Aorta (tissue), 5 donors: ENCODE measurements at regions of chr1 and their contacts with region 1.

Region 1: GRCh38 chr1:11719313-11720032 is 16.5 kb upstream of the AGTRAP start:
- DNase-seq: peak; percentile 91 to 95
- ATAC-seq: peak; percentile 92
- H3K4me3 ChIP-seq: no peak overlapping the region
- H3K27ac ChIP-seq: no peak overlapping the region
- H3K4me1 ChIP-seq: no peaks in the 10 kb centered on the region
- H3K27me3 ChIP-seq: no peaks in the 10 kb centered on the region

Region 2: DNA sequence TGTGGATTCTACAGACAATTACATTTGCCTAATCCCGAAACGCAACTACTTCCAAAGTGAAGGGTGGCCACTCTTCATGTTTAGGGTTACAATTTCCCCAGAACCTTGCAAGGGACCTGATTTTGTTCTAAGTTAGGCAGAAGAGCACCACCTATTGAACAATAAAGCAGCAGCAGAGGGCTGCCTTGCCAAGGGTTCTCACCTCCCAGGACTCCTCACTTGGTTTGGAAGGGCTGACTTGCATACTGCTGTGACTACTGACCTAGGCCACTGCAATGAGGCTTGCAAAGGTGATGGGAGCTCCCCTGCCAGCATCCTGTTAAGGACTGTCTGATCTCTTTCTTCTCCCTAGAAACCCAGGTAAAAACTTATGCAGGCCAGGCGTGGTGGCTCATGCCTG is 471.3 kb before region 1 on chr1:
- intact Hi-C with region 1: loop called in 1 of 2 experiments (anchors 5 kb)
- DNase-seq: no peak
- ATAC-seq: no peak
- H3K4me3 ChIP-seq: no peak overlapping the region
- H3K27ac ChIP-seq: no peak overlapping the region
- H3K4me1 ChIP-seq: no peaks in the 10 kb centered on the region
- H3K27me3 ChIP-seq: no peaks in the 10 kb centered on the region

Region 3: DNA sequence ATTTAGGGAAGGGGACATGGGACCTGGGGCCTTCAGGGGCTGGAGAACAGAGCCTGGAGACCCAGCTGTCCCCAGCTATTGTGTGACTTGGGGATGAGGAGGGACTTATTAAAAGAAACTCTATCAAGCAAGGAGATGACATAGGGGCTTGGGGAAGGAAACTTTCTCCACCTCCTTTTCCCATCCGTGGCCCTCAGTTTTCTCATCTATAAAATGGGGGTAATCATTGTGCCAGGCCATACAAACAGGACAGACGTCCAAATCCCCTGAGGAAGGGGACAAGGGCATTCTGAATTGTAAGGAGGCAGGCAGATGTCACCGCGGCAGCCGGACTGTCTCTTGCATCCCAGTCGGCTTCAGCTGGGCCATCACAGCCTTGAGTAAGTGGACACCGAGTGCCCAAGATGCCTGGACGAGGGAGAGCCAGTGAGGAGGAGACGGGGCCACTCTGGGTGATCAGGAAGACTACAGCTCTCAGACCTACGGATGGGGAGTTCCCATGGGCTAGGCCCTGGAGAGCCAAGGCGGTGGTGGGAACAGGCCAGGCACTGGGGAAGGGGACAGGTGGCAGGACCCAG is 67.2 kb before region 1 on chr1:
- intact Hi-C with region 1: loop called (anchors 1 to 5 kb)
- DNase-seq: no peak
- ATAC-seq: no peak
- H3K4me3 ChIP-seq: no peak overlapping the region
- H3K27ac ChIP-seq: no peak overlapping the region
- H3K4me1 ChIP-seq: no peaks in the 10 kb centered on the region
- H3K27me3 ChIP-seq: no peaks in the 10 kb centered on the region